ENCODE measurements at regions of chr12 and their contacts with region 1.

Region 1: DNA sequence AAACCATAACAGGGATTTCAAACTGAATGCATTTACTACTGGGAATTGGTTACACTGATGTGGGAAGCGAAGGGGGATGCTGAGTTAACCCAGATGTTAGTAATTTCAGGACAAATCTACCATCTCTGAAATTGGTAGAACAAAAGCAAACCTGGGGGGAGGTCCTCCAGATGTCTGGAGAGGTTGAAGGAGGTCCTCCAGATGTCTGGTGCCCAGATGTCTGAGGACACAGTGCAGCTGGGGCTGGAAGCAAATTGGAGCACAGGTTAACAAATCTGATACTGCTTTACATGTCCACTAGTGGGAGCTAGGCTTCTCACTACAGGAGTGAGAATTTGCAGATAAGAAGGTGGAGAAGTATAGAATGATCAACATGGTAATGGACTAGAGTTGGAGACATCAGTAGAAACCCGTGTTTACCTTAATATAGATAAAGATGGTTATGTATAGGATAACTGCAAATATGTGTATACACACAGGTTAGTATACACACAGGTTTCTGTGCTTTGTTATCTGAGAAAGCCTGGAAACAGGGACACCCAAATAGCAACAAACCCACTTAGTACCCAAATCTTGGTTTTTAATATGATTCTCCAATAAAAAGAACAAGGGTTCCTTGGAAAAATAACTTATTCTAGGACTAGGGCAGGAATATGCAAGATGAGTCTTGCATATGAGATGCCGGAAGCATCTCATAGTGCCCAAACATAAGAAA is 162.5 kb downstream of the C12orf50 start:
- DNase-seq: no peak
- CTCF ChIP-seq: peak; percentile 14

Region 2: DNA sequence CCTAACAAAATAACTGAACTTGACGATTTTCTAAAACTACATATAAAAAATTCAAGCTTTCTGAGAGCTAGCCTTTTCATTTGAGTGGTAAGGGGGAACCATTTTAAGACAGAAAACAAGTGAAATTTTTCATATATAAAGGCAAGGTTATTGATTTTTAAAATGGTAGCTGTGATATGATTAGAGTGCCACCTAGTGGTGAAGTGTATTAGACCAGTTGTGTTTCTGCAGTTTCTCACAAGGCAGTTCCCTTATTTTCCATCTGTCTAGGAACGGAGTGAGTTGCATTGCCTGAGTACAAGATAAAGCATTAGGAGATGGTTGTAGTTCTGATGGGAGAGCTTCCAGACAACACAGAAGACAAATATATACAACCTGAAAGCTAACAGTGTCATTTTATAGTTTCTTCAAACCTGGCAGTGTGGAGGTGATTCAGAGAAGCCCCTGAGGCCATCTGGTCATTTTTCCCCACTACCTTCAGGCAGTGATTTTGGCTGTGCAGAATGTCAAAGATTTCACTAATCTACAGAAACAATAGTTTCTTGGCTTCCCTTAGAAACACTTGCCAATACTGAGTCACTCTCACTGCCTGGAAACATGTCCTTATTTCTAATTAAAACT is 18.4 kb before region 1 on chr12:
- CTCF ChIA-PET with region 1: interaction called, 20 read pairs
- POLR2A ChIA-PET with region 1: no interaction called
- DNase-seq: peak; percentile 30
- CTCF ChIP-seq: peak; percentile 71

Region 3: GRCh38 chr12:87924149-87924548 is 57.4 kb after region 1 on chr12:
- CTCF ChIA-PET with region 1: no interaction called
- POLR2A ChIA-PET with region 1: no interaction called
- DNase-seq: no peak
- CTCF ChIP-seq: no peak